ENCODE measurements at regions of chr10 and their contacts with region 1.

Region 1: DNA sequence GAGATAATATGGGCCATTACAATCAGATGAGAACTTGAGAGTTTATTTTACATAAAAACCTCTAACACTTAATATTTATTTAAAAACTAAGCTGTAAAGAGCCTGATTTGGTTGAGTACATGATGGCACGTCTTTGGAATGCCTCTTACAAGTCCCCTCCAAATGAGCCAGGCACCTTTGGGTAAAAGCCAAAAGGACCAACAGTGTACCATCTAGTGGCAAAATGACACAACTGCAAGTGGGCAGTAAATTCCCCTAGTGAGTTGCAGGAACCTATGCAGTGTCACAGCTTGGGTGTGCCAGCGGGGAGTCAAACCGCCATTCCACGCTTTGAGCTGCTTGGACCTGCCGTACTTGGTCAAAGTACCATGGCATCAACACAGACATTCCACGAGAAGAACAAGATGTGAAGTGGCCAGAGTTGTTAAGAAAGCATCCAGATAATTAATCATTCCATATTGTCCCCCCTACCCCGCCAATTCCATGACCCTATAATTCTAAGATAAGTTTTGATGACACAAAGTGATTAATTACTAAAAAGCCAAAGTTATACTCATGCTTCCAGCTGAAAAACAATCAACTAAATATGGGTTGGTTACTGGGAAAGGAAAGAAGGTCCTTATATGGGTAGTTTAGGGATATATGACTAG is 115.2 kb downstream of the SORBS1 start:
- DNase-seq: peak; percentile 53 to 70
- H3K4me3 ChIP-seq: no peak overlapping the region
- H3K27ac ChIP-seq: no peak overlapping the region
- H3K4me1 ChIP-seq: peaks cover 0 to 11% (median 1%) of the 10 kb centered on the region in 4 experiments; a peak in 4 of 7 replicates
- H3K27me3 ChIP-seq: no peaks in the 10 kb centered on the region
- CTCF ChIP-seq: peak; percentile 58 to 97 (median 75)
- EP300 ChIP-seq: no peak
- POLR2A ChIP-seq: no peak
- RAD21 ChIP-seq: peak; percentile 59 to 75

Region 2: DNA sequence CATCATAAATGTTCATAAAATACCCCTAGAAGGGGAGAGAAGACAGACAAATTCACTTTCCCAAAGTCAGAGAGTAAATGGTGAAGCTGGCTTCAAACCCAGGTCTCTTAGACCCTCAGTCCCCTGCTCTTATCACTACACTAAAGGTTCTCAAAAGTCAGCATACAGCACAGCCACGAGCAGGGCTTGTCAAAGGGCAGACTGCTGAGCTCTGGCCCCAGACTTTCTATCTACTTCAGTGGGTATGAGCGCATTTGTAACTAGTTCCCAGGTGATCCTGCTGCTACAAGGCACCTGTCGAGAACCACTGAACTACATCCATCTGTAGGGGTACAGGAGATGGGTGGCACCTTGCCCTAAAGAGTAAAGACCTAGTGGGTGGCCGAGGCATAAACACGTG is 23.7 kb after region 1 on chr10:
- CTCF ChIA-PET with region 1: interaction called, 95 read pairs
- POLR2A ChIA-PET with region 1: no interaction called
- DNase-seq: no peak
- H3K4me3 ChIP-seq: no peak overlapping the region
- H3K27ac ChIP-seq: no peak overlapping the region
- H3K4me1 ChIP-seq: peaks cover 2 to 18% (median 14%) of the 10 kb centered on the region in 4 experiments; a peak in 6 of 7 replicates
- H3K27me3 ChIP-seq: no peaks in the 10 kb centered on the region
- CTCF ChIP-seq: no peak
- EP300 ChIP-seq: no peak
- POLR2A ChIP-seq: no peak
- RAD21 ChIP-seq: no peak

Region 3: GRCh38 chr10:95496246-95496911 is 50.4 kb after region 1 on chr10:
- CTCF ChIA-PET with region 1: interaction called, 20 read pairs
- POLR2A ChIA-PET with region 1: no interaction called
- DNase-seq: no peak
- H3K4me3 ChIP-seq: no peak overlapping the region
- H3K27ac ChIP-seq: no peak overlapping the region
- H3K4me1 ChIP-seq: peaks cover 0 to 12% (median 5%) of the 10 kb centered on the region in 4 experiments; a peak in 6 of 7 replicates
- H3K27me3 ChIP-seq: no peaks in the 10 kb centered on the region
- CTCF ChIP-seq: no peak
- EP300 ChIP-seq: no peak
- POLR2A ChIP-seq: no peak
- RAD21 ChIP-seq: no peak

Region 4: GRCh38 chr10:95588025-95588424 is 142.1 kb after region 1 on chr10:
- CTCF ChIA-PET with region 1: interaction called, 15 read pairs
- POLR2A ChIA-PET with region 1: no interaction called
- DNase-seq: no peak
- H3K4me3 ChIP-seq: no peak overlapping the region
- H3K27ac ChIP-seq: no peak overlapping the region
- H3K4me1 ChIP-seq: no peaks in the 10 kb centered on the region
- H3K27me3 ChIP-seq: no peaks in the 10 kb centered on the region
- CTCF ChIP-seq: no peak
- EP300 ChIP-seq: no peak
- POLR2A ChIP-seq: no peak
- RAD21 ChIP-seq: no peak

Region 5: DNA sequence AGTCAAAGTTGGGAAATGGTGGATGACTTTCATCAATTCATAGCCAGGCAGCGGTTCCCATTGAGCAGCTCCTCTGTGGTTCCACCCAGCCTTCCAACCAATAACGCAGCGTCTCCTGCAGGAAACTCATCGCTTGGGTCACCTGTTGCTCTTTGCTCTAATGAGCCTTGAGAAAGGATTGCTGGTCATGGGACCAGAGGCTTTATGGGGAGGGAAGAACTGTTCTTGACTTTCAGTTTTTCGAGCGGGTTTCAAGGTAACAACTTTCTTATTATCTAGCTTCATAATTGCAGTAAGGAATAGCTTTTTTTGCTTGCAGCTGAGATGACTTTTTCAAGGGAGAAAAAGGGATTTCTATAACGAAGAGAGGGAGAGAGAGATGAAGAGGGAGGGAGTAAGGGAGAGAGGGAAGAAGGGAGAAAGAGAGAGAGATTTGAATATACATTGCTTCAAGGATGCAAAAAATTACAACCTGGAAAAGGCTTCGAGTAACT is 309.6 kb after region 1 on chr10:
- CTCF ChIA-PET with region 1: no interaction called
- POLR2A ChIA-PET with region 1: no interaction called
- DNase-seq: no peak
- H3K4me3 ChIP-seq: peak overlapping the region; percentile 37 to 63 (median 53)
- H3K27ac ChIP-seq: no peak overlapping the region
- H3K4me1 ChIP-seq: peaks cover 0 to 3% (median 1%) of the 10 kb centered on the region in 4 experiments; a peak in 4 of 7 replicates
- H3K27me3 ChIP-seq: no peaks in the 10 kb centered on the region; a peak in 1 of 7 replicates
- CTCF ChIP-seq: no peak
- EP300 ChIP-seq: no peak
- POLR2A ChIP-seq: no peak
- RAD21 ChIP-seq: no peak